PC-9 (cell line): ENCODE measurements at regions of chr6 and their contacts with region 1.

Region 1: DNA sequence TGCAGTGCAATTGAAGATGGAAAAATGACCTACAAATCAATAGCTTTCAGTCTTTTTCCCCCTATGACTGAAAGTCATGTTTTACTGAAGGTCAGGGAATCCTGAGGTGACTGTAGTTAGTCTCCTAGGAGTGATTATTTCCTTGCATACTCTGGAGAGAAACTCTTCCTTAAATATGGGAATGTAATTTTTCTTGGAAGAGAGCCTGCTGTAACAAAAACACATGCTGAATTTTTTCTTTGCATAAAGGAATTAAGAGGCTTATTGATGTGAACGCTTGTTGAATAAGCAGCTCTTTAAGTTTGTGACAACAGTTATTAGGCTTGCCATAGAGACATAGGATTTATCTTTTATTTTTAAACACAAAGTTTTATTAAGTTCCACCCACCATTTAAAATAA is 64.5 kb downstream of the ELOVL2 start:
- DNase-seq: no peak
- H3K4me3 ChIP-seq: no peak overlapping the region
- H3K27ac ChIP-seq: no peak overlapping the region
- H3K4me1 ChIP-seq: no peaks in the 10 kb centered on the region
- H3K27me3 ChIP-seq: no peaks in the 10 kb centered on the region
- CTCF ChIP-seq: no peak

Region 2: DNA sequence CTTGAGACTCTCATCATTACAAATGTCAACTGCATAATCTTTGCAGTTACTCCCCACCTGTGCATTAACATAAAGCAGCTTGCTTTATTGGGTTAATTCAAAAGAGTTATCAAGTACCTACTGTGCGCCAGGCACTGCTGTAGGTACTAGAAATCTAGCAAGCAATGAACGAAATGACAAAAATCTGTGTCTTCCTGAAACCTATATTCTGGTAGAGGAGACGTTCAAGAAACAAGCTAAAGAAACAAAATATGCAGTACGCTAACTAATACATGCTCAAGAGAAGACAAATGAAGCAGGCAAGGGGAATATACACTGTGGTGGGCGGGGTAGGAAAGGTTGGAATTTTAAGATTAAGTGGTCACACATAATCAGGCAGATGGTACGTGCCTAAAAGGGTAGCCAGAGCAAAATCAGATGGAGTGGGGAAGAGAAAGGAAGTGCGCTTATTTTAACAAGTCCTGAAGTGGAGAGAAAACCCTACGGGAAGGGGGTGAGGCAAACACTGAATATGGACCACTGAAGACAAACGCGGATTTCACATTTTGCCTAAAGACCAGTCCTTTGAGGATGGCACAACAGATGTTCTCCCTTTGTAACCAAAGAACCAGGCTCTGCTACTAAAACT is 63.3 kb after region 1 on chr6:
- CTCF ChIA-PET with region 1: no interaction called
- POLR2A ChIA-PET with region 1: no interaction called
- intact Hi-C with region 1: loop called (anchors 2 kb)
- DNase-seq: no peak
- H3K4me3 ChIP-seq: no peak overlapping the region
- H3K27ac ChIP-seq: no peak overlapping the region
- H3K4me1 ChIP-seq: no peaks in the 10 kb centered on the region
- H3K27me3 ChIP-seq: no peaks in the 10 kb centered on the region
- CTCF ChIP-seq: no peak